ENCODE measurements at regions of chr7 and their contacts with region 1.

Region 1: GRCh38 chr7:5210751-5211338 is 20.8 kb downstream of the WIPI2 start:
- DNase-seq: no peak
- ATAC-seq: no peak
- H3K4me3 ChIP-seq: no peak overlapping the region
- H3K27ac ChIP-seq: no peak overlapping the region
- H3K4me1 ChIP-seq: no peaks in the 10 kb centered on the region
- H3K27me3 ChIP-seq: no peaks in the 10 kb centered on the region
- CTCF ChIP-seq: no peak
- POLR2A ChIP-seq: no peak
- RAD21 ChIP-seq: no peak

Region 2: DNA sequence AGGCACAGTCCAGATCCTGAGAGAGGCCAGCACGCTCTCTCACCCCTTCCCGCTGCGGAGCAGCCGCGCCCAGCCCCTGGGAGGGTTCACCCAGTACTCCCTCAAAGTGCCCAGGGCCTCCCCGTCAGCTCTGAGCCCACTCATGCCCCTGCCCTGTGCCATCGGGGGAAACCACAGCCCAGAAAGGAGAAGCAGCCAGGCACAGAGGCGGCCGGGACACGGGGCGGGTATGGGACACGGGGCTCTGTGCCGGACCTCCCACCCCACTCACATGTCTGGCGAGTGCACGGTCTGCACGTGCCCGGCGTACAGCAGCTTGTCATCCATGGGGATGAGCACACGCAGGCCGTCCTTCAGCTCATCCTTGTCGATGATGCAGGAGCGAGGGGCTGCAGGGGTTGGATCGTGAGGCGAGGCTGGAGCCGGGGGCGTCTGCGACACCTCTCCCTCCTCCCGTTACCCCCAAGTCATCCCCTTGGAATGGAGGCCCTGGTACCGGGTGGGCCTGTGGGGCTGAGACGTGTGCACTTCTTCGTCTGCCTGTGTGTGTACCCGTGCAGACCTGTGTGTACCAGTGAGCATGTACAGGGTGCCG is 110.1 kb after region 1 on chr7:
- CTCF ChIA-PET with region 1: no interaction called
- POLR2A ChIA-PET with region 1: no interaction called
- dilution Hi-C with region 1: no loop called
- in situ Hi-C with region 1: no loop called
- intact Hi-C with region 1: no loop called
- DNase-seq: no peak
- ATAC-seq: no peak
- H3K4me3 ChIP-seq: no peak overlapping the region
- H3K27ac ChIP-seq: no peak overlapping the region
- H3K4me1 ChIP-seq: no peaks in the 10 kb centered on the region
- H3K27me3 ChIP-seq: no peaks in the 10 kb centered on the region
- CTCF ChIP-seq: no peak
- POLR2A ChIP-seq: no peak
- RAD21 ChIP-seq: no peak

Region 3: GRCh38 chr7:5425507-5426225 is 214.8 kb after region 1 on chr7:
- CTCF ChIA-PET with region 1: no interaction called
- POLR2A ChIA-PET with region 1: interaction called, 13 read pairs
- dilution Hi-C with region 1: no loop called
- in situ Hi-C with region 1: no loop called
- intact Hi-C with region 1: no loop called
- DNase-seq: peak; percentile 89
- ATAC-seq: peak; percentile 4
- H3K4me3 ChIP-seq: peak overlapping the region; percentile 59
- H3K27ac ChIP-seq: peak overlapping the region; percentile 99
- H3K4me1 ChIP-seq: peaks cover 6% of the 10 kb centered on the region; the same call in 1 of the 2 replicates
- H3K27me3 ChIP-seq: no peaks in the 10 kb centered on the region
- CTCF ChIP-seq: no peak
- POLR2A ChIP-seq: no peak; the same call in 1 of the 2 replicates
- RAD21 ChIP-seq: no peak

Measured in IMR-90 (cell line).